ENCODE measurements at regions of chr19 and their contacts with region 1.

Region 1: GRCh38 chr19:17107525-17108452 is 32.2 kb downstream of the MYO9B start:
- DNase-seq: peak; percentile 94 to 99
- H3K4me3 ChIP-seq: peak overlapping the region; percentile 1 to 34
- H3K27ac ChIP-seq: peak overlapping the region; percentile 91 to 94
- H3K4me1 ChIP-seq: peaks cover 18 to 29% of the 10 kb centered on the region in 2 donors
- H3K27me3 ChIP-seq: no peaks in the 10 kb centered on the region
- CTCF ChIP-seq: no peak

Region 2: GRCh38 chr19:17052439-17053210 is 55.2 kb before region 1 on chr19:
- intact Hi-C with region 1: no loop called
- DNase-seq: no peak
- H3K4me3 ChIP-seq: no peak overlapping the region
- H3K27ac ChIP-seq: no peak overlapping the region
- H3K4me1 ChIP-seq: no peaks in the 10 kb centered on the region
- H3K27me3 ChIP-seq: no peaks in the 10 kb centered on the region
- CTCF ChIP-seq: peak; percentile 20 to 54 (median 36)

Region 3: GRCh38 chr19:17097593-17098126 is 10.1 kb before region 1 on chr19:
- intact Hi-C with region 1: loop called (anchors 1 kb)
- DNase-seq: no peak
- H3K4me3 ChIP-seq: no peak overlapping the region
- H3K27ac ChIP-seq: peak overlapping the region; percentile 71 to 93
- H3K4me1 ChIP-seq: peaks cover 17 to 38% of the 10 kb centered on the region in 2 donors
- H3K27me3 ChIP-seq: no peaks in the 10 kb centered on the region
- CTCF ChIP-seq: no peak

Region 4: DNA sequence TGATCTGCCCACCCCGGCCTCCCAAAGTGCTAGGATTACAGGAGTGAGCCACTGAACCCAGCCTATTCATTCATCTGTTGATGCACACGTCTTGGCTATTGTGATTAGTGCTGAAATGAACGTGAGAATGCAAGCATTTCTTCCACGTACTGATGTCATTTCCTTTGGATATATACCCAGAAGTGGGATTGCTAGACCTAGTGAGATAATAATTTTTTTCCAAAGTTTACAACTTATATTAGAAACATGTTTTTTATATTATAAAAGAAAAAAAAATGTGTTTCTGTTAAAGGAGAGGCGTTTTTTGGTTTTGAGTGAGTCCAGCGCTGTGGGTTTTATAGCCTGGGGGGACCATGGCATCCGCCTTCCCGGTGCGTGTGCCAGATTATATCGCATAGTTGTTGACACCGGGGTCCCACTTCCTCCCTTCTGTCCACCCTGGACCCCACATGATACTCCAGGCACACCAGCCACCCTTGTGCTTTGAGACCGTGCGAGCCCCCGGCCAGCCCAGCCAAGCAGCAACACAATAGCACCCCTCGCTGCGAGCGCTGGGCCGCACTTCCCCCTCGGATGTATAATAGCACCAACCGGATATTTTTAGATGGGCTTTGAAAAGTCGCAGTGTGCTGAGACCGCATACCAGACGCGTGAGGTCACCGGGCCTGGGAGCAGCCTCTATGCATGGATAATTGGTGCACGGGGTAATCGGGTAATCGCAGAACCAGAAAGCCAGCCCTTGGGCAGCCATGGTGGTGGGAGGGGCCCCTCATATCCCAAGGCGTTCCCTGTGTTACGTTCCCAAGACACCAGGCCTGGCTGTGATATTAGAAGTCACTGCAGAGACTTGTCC is 27.4 kb after region 1 on chr19:
- intact Hi-C with region 1: loop called (anchors 1 kb)
- DNase-seq: peak; percentile 94 to 99
- H3K4me3 ChIP-seq: peak overlapping the region; percentile 39 to 46
- H3K27ac ChIP-seq: peak overlapping the region; percentile 94 to 97
- H3K4me1 ChIP-seq: peaks cover 23 to 46% of the 10 kb centered on the region in 2 donors
- H3K27me3 ChIP-seq: no peaks in the 10 kb centered on the region
- CTCF ChIP-seq: peak in 2 of 3 experiments; percentile 11 to 48

Region 5: DNA sequence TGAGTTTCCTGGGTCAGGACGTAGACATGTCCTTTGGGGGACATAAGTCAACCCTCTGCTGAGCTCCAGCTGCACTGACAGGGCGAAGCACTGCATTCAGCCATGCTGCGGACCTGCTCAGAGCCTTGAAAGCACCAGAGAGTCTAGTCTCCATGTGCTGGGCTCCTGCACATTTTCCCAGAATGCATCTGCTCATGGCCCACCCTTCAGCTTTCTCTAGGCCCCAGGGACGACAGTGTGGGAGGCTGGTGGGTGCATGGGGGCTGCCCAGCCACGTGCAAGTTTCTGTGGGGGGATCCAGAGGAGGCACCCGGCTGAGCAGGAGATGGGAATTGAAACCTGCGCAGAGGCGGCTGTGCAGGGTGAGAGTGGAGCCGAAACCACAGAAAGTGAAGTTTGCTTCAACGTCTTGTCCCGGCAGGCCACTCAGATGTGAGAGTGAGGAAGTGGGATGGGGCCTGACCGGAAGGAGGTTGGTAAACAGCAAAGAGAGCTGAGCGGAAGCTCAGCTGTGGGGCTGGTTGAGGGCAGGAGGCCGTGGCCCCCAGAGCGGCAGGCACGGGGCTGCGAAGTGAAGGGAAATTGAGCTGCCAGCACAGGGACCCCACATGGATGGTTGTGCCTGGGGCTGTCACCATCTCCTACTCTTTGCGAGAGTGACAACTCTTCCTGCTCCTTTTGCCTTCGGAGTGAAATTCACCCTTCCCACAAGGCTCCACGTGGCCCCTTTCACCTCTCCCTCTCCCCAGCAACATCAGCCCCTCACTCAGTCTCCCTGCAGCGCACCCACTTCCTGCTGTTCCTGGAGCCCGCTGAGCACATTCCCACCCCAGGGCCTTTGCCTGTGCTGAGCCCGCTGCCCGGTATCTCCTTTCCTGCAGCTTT is 415.4 kb after region 1 on chr19:
- intact Hi-C with region 1: no loop called
- DNase-seq: peak in 1 of 2 donors; percentile 72
- H3K4me3 ChIP-seq: no peak overlapping the region
- H3K27ac ChIP-seq: peak overlapping the region in 1 of 2 donors; percentile 2
- H3K4me1 ChIP-seq: no peaks in the 10 kb centered on the region
- H3K27me3 ChIP-seq: no peaks in the 10 kb centered on the region
- CTCF ChIP-seq: no peak